HCT116 (cell line): ENCODE measurements at regions of chr2 and their contacts with region 1.

Region 1: GRCh38 chr2:38947240-38948239 is 57.9 kb downstream of the ARHGEF33 start:
- DNase-seq: peak; percentile 82
- ATAC-seq: peak; percentile 93
- H3K4me3 ChIP-seq: 0 out of 4 replicates have a peak overlapping the region, but pooled peaks of 1 of the 2 experiments have one; percentile 4
- H3K27ac ChIP-seq: no peak overlapping the region
- H3K4me1 ChIP-seq: peaks cover 15 to 28% of the 10 kb centered on the region in 2 experiments
- H3K27me3 ChIP-seq: no peaks in the 10 kb centered on the region
- CTCF ChIP-seq: peak; percentile 82 to 88 (median 83)
- POLR2A ChIP-seq: no peak
- RAD21 ChIP-seq: peak; percentile 87

Region 2: DNA sequence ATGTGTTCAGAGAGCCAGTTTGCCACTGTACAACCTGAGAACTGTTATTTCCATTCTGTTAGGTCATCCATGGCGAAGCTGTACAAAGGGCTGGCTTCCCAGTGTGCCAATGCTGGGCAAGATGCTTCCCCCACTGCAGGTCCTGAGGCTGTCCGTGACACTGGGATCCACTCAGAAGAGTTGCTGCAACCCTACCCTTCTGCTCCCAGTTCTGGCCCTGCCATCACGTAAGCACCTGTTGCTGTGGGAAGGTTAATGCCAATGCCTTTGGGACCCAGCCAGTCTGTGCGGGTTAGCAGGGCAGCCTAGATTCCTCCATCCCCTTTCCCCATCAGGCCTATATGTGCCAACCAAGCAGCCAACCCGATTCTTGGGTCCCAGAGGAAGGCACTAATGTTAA is 10.4 kb after region 1 on chr2:
- CTCF ChIA-PET with region 1: interaction called, 10 read pairs
- POLR2A ChIA-PET with region 1: interaction called, 3 read pairs
- RAD21 ChIA-PET with region 1: interaction called in 1 of 2 experiments, 3 read pairs
- intact Hi-C with region 1: no loop called
- DNase-seq: no peak
- ATAC-seq: no peak
- H3K4me3 ChIP-seq: no peak overlapping the region
- H3K27ac ChIP-seq: no peak overlapping the region
- H3K4me1 ChIP-seq: no peaks in the 10 kb centered on the region
- H3K27me3 ChIP-seq: no peaks in the 10 kb centered on the region
- CTCF ChIP-seq: no peak
- POLR2A ChIP-seq: no peak
- RAD21 ChIP-seq: no peak

Region 3: DNA sequence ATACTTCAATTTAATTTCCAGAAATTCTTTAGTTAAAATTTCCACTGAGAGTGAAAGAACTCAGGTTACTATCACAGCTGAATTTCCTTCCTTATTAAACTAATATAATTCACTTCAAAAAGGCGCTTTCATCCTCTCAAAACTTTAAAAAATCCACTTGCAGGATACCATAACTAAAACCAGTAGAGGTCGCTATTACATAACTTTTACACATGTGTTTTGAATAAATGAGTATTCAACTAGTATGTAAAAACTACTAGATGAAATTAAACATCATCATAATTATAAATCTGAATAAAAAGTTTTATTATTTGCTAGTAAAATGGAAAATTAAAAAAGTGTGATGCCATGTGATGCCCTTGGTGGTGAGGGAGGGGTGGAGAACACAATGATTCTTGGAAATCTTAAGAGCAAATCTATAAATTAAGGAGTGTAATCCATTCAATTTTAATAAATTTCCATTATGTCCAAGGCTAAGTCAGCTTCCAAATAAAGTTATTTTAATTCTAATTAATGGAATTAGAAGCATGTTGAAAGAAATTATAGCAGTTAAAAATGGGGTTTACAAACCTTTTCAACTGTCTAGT is 111.9 kb after region 1 on chr2:
- CTCF ChIA-PET with region 1: interaction called, 10 read pairs
- POLR2A ChIA-PET with region 1: no interaction called
- RAD21 ChIA-PET with region 1: interaction called in 1 of 2 experiments, 6 read pairs
- intact Hi-C with region 1: no loop called
- DNase-seq: peak; percentile 18
- ATAC-seq: no peak
- H3K4me3 ChIP-seq: no peak overlapping the region
- H3K27ac ChIP-seq: no peak overlapping the region
- H3K4me1 ChIP-seq: no peaks in the 10 kb centered on the region
- H3K27me3 ChIP-seq: no peaks in the 10 kb centered on the region
- CTCF ChIP-seq: peak; percentile 43 to 78 (median 76); a peak in 5 of 6 replicates
- POLR2A ChIP-seq: no peak
- RAD21 ChIP-seq: peak; percentile 83

Region 4: DNA sequence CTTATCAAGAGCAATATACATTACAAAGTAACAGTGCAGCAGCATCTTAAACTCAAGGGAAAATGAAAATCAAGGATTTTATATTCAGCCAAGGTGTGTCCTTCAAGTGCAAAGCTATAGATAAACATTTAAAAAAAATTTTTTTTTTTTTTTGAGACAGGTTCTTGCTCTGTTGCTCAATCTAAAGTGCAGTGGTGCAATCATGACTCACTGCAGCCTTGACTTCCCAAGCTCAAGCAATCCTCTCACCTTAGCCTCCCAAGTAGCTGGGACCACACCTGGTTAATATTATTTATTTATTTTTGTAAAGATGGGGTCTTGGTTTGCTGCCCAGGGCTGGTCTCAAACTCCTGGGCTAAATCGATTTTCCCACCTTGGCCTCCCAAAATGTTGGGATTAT is 287.2 kb after region 1 on chr2:
- CTCF ChIA-PET with region 1: interaction called, 133 read pairs
- POLR2A ChIA-PET with region 1: no interaction called
- RAD21 ChIA-PET with region 1: interaction called, 10 to 15 read pairs
- intact Hi-C with region 1: loop called (anchors 1 kb)
- DNase-seq: no peak
- ATAC-seq: no peak
- H3K4me3 ChIP-seq: no peak overlapping the region
- H3K27ac ChIP-seq: no peak overlapping the region
- H3K4me1 ChIP-seq: no peaks in the 10 kb centered on the region
- H3K27me3 ChIP-seq: no peaks in the 10 kb centered on the region
- CTCF ChIP-seq: no peak
- POLR2A ChIP-seq: no peak
- RAD21 ChIP-seq: no peak

Region 5: GRCh38 chr2:39447266-39448169 is 500.0 kb after region 1 on chr2:
- CTCF ChIA-PET with region 1: no interaction called
- POLR2A ChIA-PET with region 1: no interaction called
- RAD21 ChIA-PET with region 1: no interaction called
- intact Hi-C with region 1: no loop called
- DNase-seq: no peak
- ATAC-seq: no peak
- H3K4me3 ChIP-seq: no peak overlapping the region
- H3K27ac ChIP-seq: no peak overlapping the region
- H3K4me1 ChIP-seq: no peaks in the 10 kb centered on the region
- H3K27me3 ChIP-seq: no peaks in the 10 kb centered on the region
- CTCF ChIP-seq: no peak
- POLR2A ChIP-seq: no peak
- RAD21 ChIP-seq: no peak